Gastrocnemius medialis (tissue), 4 donors: ENCODE measurements at regions of chr10 and their contacts with region 1.

Region 1: GRCh38 chr10:132458593-132459300 is 61.7 kb downstream of the PWWP2B start:
- DNase-seq: no peak
- ATAC-seq: peak; percentile 49 to 61
- H3K4me3 ChIP-seq: no peak overlapping the region
- H3K27ac ChIP-seq: no peak overlapping the region
- H3K4me1 ChIP-seq: peaks cover 13 to 16% of the 10 kb centered on the region in 2 donors
- H3K27me3 ChIP-seq: no peaks in the 10 kb centered on the region
- CTCF ChIP-seq: peak; percentile 93 to 99 (median 98)
- POLR2A ChIP-seq: no peak

Region 2: DNA sequence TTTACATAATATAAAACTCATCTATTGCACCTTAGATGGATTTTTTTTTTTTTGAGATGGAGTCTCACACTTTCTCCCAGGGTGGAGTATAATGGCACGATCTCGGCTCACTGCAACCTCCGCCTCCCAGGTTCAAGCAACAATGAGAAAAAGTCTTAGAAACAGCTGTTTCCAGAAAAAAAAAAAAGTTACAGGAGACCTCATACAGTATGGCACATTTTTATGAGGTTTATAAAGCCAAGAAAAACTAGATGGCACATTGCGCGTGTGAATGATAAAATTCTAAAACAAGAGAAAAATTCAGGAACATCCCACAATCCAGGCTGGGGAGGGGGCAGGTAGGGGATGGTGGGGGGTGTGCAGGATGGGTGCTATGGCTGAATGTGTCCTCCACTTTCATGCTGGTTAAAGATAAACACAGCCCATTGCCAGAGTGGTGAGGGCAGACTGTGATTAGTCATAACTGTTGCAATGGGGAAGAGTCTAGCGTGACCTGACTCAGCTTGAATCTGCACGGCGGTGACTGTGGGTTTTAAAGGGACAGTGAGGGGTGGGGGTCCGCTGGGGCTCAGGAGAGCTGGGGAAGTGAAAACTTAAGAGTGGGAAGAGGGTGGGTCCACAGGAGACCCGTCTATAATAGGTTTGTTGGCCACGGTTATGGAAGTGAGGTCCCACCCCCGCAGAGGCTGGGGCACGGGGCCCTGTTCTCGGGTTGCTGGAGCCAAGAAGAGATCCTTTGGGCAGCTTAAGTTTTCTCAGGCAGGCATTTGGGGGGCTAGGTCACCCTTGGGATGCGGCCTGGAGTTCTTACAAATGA is 138.7 kb before region 1 on chr10:
- in situ Hi-C with region 1: no loop called
- intact Hi-C with region 1: no loop called
- DNase-seq: peak; percentile 43 to 69
- ATAC-seq: peak; percentile 99
- H3K4me3 ChIP-seq: peak overlapping the region; percentile 5 to 42 (median 26)
- H3K27ac ChIP-seq: peak overlapping the region in 3 of 4 donors; percentile 9 to 57 (median 57)
- H3K4me1 ChIP-seq: peaks cover 3 to 11% of the 10 kb centered on the region in 2 donors
- H3K27me3 ChIP-seq: no peaks in the 10 kb centered on the region
- CTCF ChIP-seq: no peak
- POLR2A ChIP-seq: no peak

Region 3: GRCh38 chr10:132516771-132517725 is 58.3 kb after region 1 on chr10:
- in situ Hi-C with region 1: loop called in 1 of 4 experiments (anchors 10 kb)
- intact Hi-C with region 1: no loop called
- DNase-seq: peak; percentile 92 to 97
- ATAC-seq: peak; percentile 76 to 83
- H3K4me3 ChIP-seq: peak overlapping the region; percentile 17 to 39 (median 31)
- H3K27ac ChIP-seq: peak overlapping the region; percentile 86 to 93 (median 88)
- H3K4me1 ChIP-seq: peaks cover 54 to 56% of the 10 kb centered on the region in 2 donors
- H3K27me3 ChIP-seq: no peaks in the 10 kb centered on the region
- CTCF ChIP-seq: peak in 1 of 5 experiments; percentile 6
- POLR2A ChIP-seq: peak; percentile 50 to 56

Region 4: DNA sequence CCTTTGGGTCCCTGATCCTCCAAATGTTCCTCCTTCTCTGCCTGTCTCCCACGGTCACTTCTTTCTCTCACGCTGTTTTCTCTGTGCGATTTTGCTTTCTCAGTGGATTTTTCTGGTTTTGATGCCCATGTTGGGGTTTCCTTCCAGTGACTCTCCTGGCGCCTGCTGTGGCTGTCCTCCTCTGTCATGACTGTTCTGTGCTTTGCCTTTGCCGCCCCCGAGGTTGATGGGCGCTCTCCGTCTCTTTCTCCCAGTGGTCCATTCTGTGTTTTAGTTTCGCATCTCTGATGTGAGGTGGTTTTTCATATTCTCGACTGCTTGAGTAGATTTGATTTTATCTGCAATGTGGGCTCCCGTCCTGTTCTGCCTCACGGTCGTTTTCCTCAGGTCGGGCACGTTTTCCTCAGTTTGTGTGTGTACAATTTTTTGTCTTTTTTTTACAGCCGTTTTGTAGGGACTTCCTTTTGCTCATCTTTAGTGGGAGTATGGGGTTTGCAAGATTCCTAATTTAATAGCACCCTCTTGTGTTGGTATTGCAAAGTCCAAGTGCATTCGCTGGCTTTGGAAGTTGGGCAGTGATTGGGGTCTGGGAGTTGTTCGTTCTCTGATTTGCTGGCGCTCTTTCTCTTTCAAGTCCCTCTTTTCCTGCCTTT is 178.9 kb after region 1 on chr10:
- in situ Hi-C with region 1: loop called (anchors 5 to 10 kb)
- intact Hi-C with region 1: loop called (anchors 1 kb)
- DNase-seq: peak in 1 of 2 donors; percentile 12
- ATAC-seq: peak; percentile 72 to 83
- H3K4me3 ChIP-seq: no peak overlapping the region
- H3K27ac ChIP-seq: no peak overlapping the region
- H3K4me1 ChIP-seq: peaks cover 14 to 23% of the 10 kb centered on the region in 2 donors
- H3K27me3 ChIP-seq: no peaks in the 10 kb centered on the region
- CTCF ChIP-seq: peak; percentile 56 to 78 (median 69)
- POLR2A ChIP-seq: no peak

Region 5: DNA sequence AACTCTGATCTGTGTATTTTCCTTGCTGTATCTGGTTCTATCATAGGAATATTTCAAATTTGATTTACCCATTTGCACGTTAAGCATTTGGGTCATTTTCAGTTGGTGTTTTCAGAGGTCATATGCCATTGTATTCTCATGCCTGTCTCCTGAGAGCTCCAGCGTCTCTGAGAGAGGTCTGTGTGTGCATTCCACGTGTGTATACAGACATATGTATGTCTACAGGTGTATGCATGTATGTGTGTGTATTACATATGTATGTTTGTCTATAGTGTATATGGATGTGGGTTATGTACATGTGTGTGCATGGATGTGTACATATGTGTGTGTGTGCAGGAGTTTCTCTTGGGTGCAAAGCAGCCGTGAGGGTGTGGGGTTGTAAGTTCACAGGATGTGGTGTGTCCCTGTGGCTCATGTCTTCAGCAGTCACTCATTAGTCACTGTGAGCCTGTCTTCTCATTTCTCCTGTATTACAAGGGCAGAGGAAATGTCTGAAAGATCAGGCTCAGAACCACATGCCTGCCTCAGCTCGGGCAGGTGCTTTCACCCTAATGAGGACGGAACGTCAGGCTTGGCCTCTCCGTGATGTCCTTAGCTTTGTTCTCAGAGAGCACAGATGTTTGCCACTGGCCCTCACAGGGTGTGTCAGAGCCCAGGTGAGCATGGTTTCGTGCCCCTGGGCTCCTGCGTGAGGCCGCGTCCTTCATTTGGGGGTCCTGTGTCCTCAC is 225.6 kb after region 1 on chr10:
- in situ Hi-C with region 1: no loop called
- intact Hi-C with region 1: no loop called
- DNase-seq: peak in 1 of 2 donors; percentile 5
- ATAC-seq: no peak
- H3K4me3 ChIP-seq: no peak overlapping the region
- H3K27ac ChIP-seq: no peak overlapping the region
- H3K4me1 ChIP-seq: no peaks in the 10 kb centered on the region
- H3K27me3 ChIP-seq: no peaks in the 10 kb centered on the region
- CTCF ChIP-seq: no peak
- POLR2A ChIP-seq: no peak

Region 6: GRCh38 chr10:132722394-132723329 is 263.9 kb after region 1 on chr10:
- in situ Hi-C with region 1: no loop called
- intact Hi-C with region 1: loop called (anchors 5 kb)
- DNase-seq: peak; percentile 77 to 82
- ATAC-seq: peak; percentile 95 to 96
- H3K4me3 ChIP-seq: peak overlapping the region; percentile 25 to 35 (median 31)
- H3K27ac ChIP-seq: peak overlapping the region; percentile 67 to 86 (median 78)
- H3K4me1 ChIP-seq: peaks cover 10 to 14% of the 10 kb centered on the region in 2 donors
- H3K27me3 ChIP-seq: no peaks in the 10 kb centered on the region
- CTCF ChIP-seq: peak in 2 of 5 experiments; percentile 14 to 32
- POLR2A ChIP-seq: peak in 1 of 2 donors; percentile 25

Region 7: DNA sequence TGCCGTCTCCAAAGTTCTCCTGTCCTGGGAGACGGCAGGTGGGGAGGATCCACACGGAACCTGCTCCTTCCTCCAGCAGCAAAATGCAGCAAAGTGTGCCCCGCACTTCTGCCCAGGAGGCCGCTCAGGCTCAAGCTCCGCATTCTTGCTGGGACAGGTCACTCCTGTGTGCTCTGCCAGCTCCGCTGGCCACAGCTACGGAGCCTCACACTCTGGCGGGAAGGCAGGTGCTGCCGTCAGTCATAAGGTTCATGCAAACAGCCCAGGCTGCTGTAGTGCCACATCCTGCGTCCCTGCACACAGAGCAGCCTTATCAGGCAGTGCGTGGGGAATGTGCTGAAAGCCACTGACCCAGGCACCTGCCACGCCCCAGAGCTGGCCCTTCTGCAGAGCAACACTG is 651.4 kb after region 1 on chr10:
- in situ Hi-C with region 1: no loop called
- intact Hi-C with region 1: loop called (anchors 10 kb)
- DNase-seq: peak; percentile 86 to 96
- ATAC-seq: peak; percentile 91 to 94
- H3K4me3 ChIP-seq: peak overlapping the region in 1 of 4 donors; percentile 17
- H3K27ac ChIP-seq: peak overlapping the region; percentile 76 to 89 (median 82)
- H3K4me1 ChIP-seq: peaks cover 12 to 14% of the 10 kb centered on the region in 2 donors
- H3K27me3 ChIP-seq: no peaks in the 10 kb centered on the region
- CTCF ChIP-seq: no peak
- POLR2A ChIP-seq: peak in 1 of 2 donors; percentile 60